ENCODE measurements at regions of chr2 and their contacts with region 1.

Region 1: GRCh38 chr2:43158259-43158880 is 68.0 kb downstream of the ZFP36L2 start:
- DNase-seq: peak; percentile 74
- H3K4me3 Mint-ChIP-seq: peak overlapping the region; percentile 10
- H3K27ac Mint-ChIP-seq: peak overlapping the region; percentile 70
- H3K4me1 Mint-ChIP-seq: peaks cover 62% of the 10 kb centered on the region
- H3K27me3 Mint-ChIP-seq: no peaks in the 10 kb centered on the region
- CTCF ChIP-seq: no peak

Region 2: GRCh38 chr2:43139996-43140621 is 18.3 kb before region 1 on chr2:
- CTCF ChIA-PET with region 1: interaction called, 15 read pairs
- intact Hi-C with region 1: no loop called
- DNase-seq: no peak
- H3K4me3 Mint-ChIP-seq: no peak overlapping the region
- H3K27ac Mint-ChIP-seq: no peak overlapping the region
- H3K4me1 Mint-ChIP-seq: peaks cover 34% of the 10 kb centered on the region
- H3K27me3 Mint-ChIP-seq: no peaks in the 10 kb centered on the region
- CTCF ChIP-seq: no peak